ENCODE measurements at regions of chr1 and their contacts with region 1.

Region 1: GRCh38 chr1:214648801-214649200 is 45.8 kb downstream of the CENPF start:
- DNase-seq: no peak
- H3K4me3 ChIP-seq: no peak overlapping the region
- CTCF ChIP-seq: no peak

Region 2: DNA sequence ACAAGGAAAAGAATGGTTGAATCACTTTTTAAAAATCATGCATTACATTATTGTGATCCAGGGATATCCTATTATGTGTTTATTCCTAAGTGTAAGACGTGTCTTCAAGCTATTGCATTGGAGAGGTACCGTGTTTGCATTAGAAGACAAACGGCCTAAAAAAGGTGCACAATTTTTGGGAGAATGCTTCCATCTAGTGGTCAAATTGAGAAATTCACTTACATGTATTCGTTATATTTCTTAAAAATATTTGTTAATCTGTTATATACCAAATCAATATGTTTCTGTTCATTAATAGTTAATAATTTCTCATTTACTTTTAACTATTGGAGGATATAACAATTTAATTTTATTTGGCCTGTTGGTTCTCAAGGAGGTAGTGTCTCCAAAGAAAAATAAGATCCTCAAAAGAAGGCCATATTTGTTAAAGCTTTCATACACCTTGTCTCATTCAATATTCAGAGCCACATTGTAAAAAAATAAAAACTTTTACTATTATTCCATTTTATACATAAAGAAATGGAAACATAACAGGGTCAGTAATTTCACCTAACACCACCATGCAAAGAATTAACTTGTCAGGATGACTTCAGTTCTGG is 877.9 kb after region 1 on chr1:
- CTCF ChIA-PET with region 1: interaction called, 221 read pairs
- POLR2A ChIA-PET with region 1: no interaction called
- DNase-seq: no peak
- H3K4me3 ChIP-seq: no peak overlapping the region
- CTCF ChIP-seq: peak; percentile 27